Gastrocnemius medialis (tissue), 4 donors: ENCODE measurements at regions of chr17 and their contacts with region 1.

Region 1: DNA sequence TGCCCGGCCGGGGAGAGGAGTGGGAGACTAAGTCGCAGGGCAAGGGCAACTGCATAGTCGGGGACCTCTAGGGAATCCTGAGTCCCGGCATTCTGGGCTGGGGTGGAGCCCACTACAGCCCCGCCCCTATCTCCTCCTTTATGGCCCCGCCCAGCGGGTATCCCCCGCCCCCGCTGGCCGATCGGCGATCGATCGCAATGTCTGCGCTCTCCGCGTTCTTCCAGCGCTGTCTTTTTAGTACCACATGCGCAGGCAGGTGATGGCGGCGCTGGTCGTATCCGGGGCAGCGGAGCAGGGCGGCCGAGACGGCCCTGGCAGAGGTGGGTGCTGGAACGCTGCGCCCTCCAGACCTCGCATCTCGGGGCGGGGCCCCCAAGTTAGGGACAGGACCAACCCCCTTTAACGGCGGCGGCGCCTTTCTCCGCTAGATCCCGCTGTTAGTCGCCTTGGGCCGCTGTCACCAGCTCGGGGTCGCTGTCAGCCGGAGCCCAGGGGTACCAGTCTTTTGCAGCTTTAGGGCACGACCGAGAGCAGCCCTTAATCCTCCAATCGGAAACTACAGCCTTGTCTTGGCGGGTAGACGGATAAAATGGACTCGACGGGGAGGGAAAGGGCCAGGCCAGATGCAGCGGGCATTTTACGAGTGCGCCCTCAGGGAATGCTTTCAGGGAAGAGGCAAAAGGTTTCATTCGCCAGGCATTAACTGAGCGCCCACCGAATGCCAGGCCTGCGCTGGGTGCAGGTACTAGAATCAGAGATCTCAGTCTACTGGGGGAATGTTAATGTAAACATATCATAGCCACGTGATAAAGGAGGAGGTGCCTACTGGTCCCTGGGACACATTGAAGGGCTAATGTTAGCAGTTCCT is at the start of gene DPH1:
- DNase-seq: peak; percentile 85 to 90
- ATAC-seq: peak; percentile 81 to 83
- H3K4me3 ChIP-seq: peak within 1 kb of the TSS; percentile 75 to 100 (median 91)
- H3K27ac ChIP-seq: peak within 1 kb of the TSS; percentile 87 to 98 (median 96)
- H3K4me1 ChIP-seq: peaks cover 25 to 29% of the 10 kb centered on the region in 2 donors
- H3K27me3 ChIP-seq: no peaks in the 10 kb centered on the region
- CTCF ChIP-seq: peak in 2 of 5 experiments; percentile 10 to 41
- POLR2A ChIP-seq: peak; percentile 78 to 88
- total RNA-seq, gene DPH1: 47.2 to 59.9 (median 57.7) TPM

Region 2: GRCh38 chr17:1673041-1673785 is 356.9 kb before region 1 on chr17:
- in situ Hi-C with region 1: loop called (anchors 25 kb)
- intact Hi-C with region 1: loop called (anchors 2 kb)
- DNase-seq: peak in 1 of 2 donors; percentile 25
- ATAC-seq: no peak
- H3K4me3 ChIP-seq: no peak overlapping the region
- H3K27ac ChIP-seq: peak overlapping the region; percentile 8 to 91 (median 38)
- H3K4me1 ChIP-seq: peaks cover 13 to 25% of the 10 kb centered on the region in 2 donors
- H3K27me3 ChIP-seq: no peaks in the 10 kb centered on the region
- CTCF ChIP-seq: no peak
- POLR2A ChIP-seq: no peak

Region 3: DNA sequence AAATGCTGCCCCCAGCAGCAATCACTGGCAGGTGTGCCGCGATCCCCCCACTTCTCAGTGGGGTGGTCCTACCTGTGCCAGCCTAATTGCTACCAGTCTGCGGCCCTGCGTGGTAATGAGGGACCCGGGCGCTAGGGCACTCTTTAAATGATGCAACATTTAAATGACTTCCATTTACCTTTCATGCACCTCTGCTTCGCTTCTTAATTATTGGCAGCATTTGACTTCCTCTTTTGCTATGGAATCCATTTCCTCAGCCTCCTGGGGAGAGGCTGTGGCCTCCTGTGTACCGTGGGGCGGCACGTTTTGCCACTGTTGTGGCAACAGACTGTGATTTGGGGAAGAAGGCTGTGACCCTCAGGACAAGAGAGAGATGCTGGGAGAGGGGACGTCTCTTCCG is 114.3 kb before region 1 on chr17:
- in situ Hi-C with region 1: loop called in 3 of 4 experiments (anchors 5 to 10 kb)
- intact Hi-C with region 1: no loop called
- DNase-seq: no peak
- ATAC-seq: no peak
- H3K4me3 ChIP-seq: no peak overlapping the region
- H3K27ac ChIP-seq: no peak overlapping the region
- H3K4me1 ChIP-seq: peaks cover 3 to 5% of the 10 kb centered on the region in 2 donors
- H3K27me3 ChIP-seq: peaks cover 3 to 6% (median 5%) of the 10 kb centered on the region in 3 donors
- CTCF ChIP-seq: no peak
- POLR2A ChIP-seq: no peak

Region 4: GRCh38 chr17:1992541-1992940 is 37.6 kb before region 1 on chr17:
- in situ Hi-C with region 1: no loop called
- intact Hi-C with region 1: loop called (anchors 2 kb)
- DNase-seq: peak; percentile 87 to 88
- ATAC-seq: peak; percentile 93 to 94
- H3K4me3 ChIP-seq: peak overlapping the region in 2 of 4 donors; percentile 18 to 21
- H3K27ac ChIP-seq: peak overlapping the region; percentile 76 to 82 (median 79)
- H3K4me1 ChIP-seq: peaks cover 12 to 16% of the 10 kb centered on the region in 2 donors
- H3K27me3 ChIP-seq: no peaks in the 10 kb centered on the region
- CTCF ChIP-seq: no peak
- POLR2A ChIP-seq: peak; percentile 18 to 32